Transverse colon (tissue), 4 donors: ENCODE measurements at regions of chr16 and their contacts with region 1.

Region 1: DNA sequence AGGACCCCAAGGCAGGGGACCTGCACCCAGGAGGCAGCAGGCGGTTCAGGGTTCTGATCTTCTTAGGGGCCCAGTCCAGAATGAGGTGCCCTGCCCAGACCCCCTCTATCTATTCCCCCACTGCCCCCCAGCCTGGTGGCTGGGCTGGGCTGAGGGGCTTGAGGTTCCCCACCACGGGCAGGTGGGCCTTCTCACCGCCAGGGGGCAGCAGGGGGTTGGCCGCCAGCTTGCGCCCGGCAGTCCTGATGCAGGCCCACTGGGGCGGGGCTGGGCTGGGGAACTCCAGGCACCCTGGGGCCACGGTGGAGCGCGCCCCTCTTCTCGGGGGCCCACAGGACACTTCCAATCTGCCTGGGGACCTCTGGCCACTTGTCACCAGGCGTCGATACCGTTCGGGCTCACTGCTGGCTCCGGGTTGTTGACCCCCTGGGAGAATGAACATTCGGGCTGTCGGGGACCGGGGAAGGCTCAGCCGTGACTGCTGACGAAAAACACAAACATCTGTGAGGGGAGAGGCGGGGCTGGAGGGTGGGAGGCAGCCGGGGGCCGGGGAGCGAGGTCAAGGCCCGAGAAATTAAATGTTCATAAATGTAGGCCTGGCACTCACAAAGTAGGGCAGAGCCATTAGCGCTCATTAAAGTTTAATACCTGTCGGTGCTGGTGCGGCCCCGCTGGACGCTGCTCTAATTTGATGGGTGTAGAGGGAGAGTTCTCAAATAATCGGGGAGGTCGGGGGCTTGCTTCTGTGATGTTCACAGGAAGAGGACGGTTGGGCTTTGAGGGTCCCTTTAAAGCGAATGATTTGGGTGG is 219.2 kb upstream of the GSE1 start:
- DNase-seq: peak; percentile 73
- H3K4me3 ChIP-seq: no peak overlapping the region
- H3K27ac ChIP-seq: peak overlapping the region; percentile 57 to 85 (median 74)
- H3K4me1 ChIP-seq: peaks cover 25 to 53% (median 37%) of the 10 kb centered on the region in 4 donors
- H3K27me3 ChIP-seq: no peaks in the 10 kb centered on the region
- CTCF ChIP-seq: peak; percentile 86 to 94 (median 93)
- EP300 ChIP-seq: no peak
- POLR2A ChIP-seq: no peak

Region 2: GRCh38 chr16:85305996-85306792 is 87.7 kb before region 1 on chr16:
- in situ Hi-C with region 1: no loop called
- intact Hi-C with region 1: loop called (anchors 10 kb)
- DNase-seq: peak; percentile 87
- H3K4me3 ChIP-seq: no peak overlapping the region
- H3K27ac ChIP-seq: peak overlapping the region; percentile 1 to 46 (median 26)
- H3K4me1 ChIP-seq: peaks cover 7 to 53% (median 13%) of the 10 kb centered on the region in 4 donors
- H3K27me3 ChIP-seq: no peaks in the 10 kb centered on the region
- CTCF ChIP-seq: no peak
- EP300 ChIP-seq: no peak
- POLR2A ChIP-seq: no peak

Region 3: DNA sequence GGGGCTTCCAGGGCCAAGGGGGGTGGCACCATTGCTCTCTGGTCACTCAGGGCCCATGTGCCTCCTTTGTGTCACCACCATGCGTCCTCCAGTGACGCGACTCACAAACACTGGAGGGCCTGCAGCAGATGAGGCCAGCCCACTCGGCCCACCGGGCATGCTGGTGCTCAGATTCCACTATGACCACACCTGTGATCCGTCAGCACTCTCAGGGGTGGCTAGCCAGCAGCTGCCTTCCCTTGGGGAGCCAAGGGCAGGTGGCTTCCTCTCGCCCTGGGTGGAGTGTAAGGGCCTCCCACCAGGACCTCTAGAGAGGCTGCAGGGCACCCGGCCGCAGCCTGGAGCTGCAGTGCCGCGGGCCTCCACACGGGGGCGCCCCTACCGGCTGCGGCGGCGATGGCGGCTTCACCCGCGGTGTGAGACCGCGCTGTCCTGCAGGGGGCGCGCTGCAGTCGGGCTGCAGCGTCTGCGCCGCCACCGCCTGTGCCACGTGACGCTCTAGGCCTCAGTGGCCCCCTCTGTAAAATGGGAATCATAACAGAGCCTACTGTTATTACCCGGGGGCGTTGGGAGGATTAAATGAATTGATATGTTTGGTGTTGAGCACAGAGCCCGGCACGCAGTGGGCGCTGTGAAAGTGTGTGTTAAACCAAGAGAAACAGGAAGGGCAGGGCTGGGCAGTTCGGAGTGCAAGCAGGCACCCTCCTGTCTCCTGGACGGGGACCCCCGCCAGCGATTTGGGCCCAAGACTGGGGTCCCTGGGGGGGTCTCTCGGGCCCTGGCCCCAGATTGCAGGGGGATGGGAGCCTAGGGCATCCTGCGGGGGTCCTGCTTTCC is 26.8 kb after region 1 on chr16:
- in situ Hi-C with region 1: no loop called
- intact Hi-C with region 1: loop called (anchors 2 kb)
- DNase-seq: peak; percentile 75
- H3K4me3 ChIP-seq: no peak overlapping the region
- H3K27ac ChIP-seq: peak overlapping the region in 3 of 4 donors; percentile 43 to 74 (median 52)
- H3K4me1 ChIP-seq: peaks cover 13 to 45% (median 36%) of the 10 kb centered on the region in 4 donors
- H3K27me3 ChIP-seq: no peaks in the 10 kb centered on the region
- CTCF ChIP-seq: peak; percentile 97 to 100 (median 100)
- EP300 ChIP-seq: no peak
- POLR2A ChIP-seq: no peak